A673 (cell line): ENCODE measurements at regions of chrX and their contacts with region 1.

Region 1: GRCh38 chrX:73847945-73848344 is 284.9 kb downstream of the CHIC1 start:
- DNase-seq: no peak
- H3K4me3 ChIP-seq: peak overlapping the region; percentile 42
- H3K27ac ChIP-seq: no peak overlapping the region
- H3K4me1 ChIP-seq: peaks cover 5% of the 10 kb centered on the region
- H3K27me3 ChIP-seq: no peaks in the 10 kb centered on the region
- CTCF ChIP-seq: no peak; the same call in 1 of the 2 replicates

Region 2: DNA sequence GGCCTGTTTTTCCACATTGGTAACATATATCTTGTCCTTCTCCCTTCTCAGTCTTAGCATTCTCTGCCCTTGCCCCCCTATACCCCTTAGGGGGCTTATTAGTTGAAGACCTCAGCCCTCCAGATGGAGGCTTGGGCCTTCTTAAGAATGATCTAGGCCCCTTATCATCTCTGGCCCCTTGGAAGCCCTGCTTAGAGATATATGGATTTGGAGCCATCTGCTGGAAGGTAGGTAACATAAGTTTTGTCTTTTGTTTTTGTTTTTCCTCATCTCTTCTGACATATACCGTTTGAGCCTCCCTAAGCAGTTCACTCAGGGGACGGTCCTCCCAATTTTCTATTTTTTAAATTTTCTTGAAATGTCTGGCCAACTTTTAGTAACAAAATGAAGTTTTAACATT is 585.0 kb before region 1 on chrX:
- CTCF ChIA-PET with region 1: no interaction called
- POLR2A ChIA-PET with region 1: no interaction called
- intact Hi-C with region 1: loop called (anchors 10 kb)
- DNase-seq: peak; percentile 45
- H3K4me3 ChIP-seq: no peak overlapping the region
- H3K27ac ChIP-seq: no peak overlapping the region
- H3K4me1 ChIP-seq: no peaks in the 10 kb centered on the region
- H3K27me3 ChIP-seq: no peaks in the 10 kb centered on the region
- CTCF ChIP-seq: peak; percentile 42

Region 3: DNA sequence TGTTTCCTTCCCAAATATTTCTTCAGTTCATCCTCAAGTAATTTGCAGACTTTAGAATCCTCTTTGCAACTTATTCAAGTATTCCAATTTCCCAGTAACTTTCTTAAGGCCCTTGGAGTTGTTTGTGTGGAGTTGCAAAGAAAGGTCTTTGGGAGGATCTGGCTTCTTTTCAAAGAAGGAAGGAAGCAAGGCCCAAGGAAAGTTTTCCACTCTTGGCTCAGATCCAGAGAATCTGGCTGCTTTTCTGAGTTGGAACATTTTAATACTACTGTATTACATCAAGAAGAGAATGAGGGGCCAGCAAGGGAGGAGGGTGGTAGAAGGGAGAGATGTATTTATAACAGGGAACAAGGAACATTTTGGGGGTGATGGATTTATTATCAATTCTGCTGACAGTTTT is 390.6 kb before region 1 on chrX:
- CTCF ChIA-PET with region 1: no interaction called
- POLR2A ChIA-PET with region 1: no interaction called
- intact Hi-C with region 1: loop called (anchors 10 kb)
- DNase-seq: no peak
- H3K4me3 ChIP-seq: no peak overlapping the region
- H3K27ac ChIP-seq: no peak overlapping the region
- H3K4me1 ChIP-seq: no peaks in the 10 kb centered on the region
- H3K27me3 ChIP-seq: peaks cover 37% of the 10 kb centered on the region
- CTCF ChIP-seq: no peak